ENCODE measurements at regions of chr6 and their contacts with region 1.

Region 1: GRCh38 chr6:158475344-158476302 is 84.3 kb upstream of the TMEM181 start:
- DNase-seq: peak; percentile 88
- ATAC-seq: peak; percentile 90
- H3K4me3 ChIP-seq: peak overlapping the region; percentile 55
- H3K27ac ChIP-seq: peak overlapping the region; percentile 81
- H3K4me1 ChIP-seq: peaks cover 31% of the 10 kb centered on the region
- H3K27me3 ChIP-seq: no peaks in the 10 kb centered on the region
- CTCF ChIP-seq: no peak
- EP300 ChIP-seq: peak; percentile 79 to 94
- POLR2A ChIP-seq: peak; percentile 79
- RAD21 ChIP-seq: no peak

Region 2: DNA sequence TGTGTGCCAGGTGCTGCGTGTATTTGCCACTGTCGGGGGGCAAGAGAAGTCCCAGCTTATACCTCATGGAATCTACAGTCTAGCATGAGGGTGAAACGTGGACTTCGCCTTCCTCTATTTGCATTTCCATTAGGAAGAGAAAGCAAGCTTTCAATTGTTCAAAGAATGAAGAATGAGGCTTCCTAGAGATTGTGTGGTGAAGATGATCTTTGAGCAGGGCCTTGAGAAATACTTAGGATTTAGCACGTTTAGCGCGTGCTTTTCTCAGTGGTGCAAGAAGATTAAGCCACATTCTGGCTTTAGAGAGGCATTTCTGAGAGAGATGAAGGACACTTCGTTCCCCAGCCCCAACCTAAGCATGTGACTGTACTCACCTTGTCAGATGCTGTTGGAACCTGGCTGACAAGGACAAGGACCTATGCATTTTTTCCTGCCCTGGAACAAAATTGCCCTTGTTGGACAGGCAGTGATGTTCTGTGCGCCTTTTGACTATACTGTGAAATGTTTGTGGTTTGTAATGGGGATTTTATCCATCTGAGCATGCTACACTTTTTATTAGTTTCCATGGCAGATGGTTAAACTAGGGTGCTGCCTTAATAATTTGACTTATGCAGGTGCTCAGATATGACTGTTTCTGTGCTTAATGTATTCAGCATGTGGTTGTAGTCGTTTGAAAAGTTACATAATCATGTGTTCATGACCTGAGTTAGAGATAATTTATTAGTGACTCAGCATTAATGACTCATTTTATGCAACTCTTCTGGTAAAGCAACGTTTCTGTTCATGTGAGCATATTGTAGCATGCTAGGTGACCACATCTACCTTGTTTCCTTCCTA is 152.7 kb before region 1 on chr6:
- CTCF ChIA-PET with region 1: no interaction called
- POLR2A ChIA-PET with region 1: no interaction called
- RAD21 ChIA-PET with region 1: no interaction called
- SMC1A ChIA-PET with region 1: interaction called, 3 read pairs
- in situ Hi-C with region 1: no loop called
- intact Hi-C with region 1: loop called (anchors 2 kb)
- DNase-seq: peak; percentile 45
- ATAC-seq: peak; percentile 87
- H3K4me3 ChIP-seq: no peak overlapping the region; the same call in 1 of the 2 replicates
- H3K27ac ChIP-seq: peak overlapping the region; percentile 2
- H3K4me1 ChIP-seq: peaks cover 31% of the 10 kb centered on the region
- H3K27me3 ChIP-seq: no peaks in the 10 kb centered on the region
- CTCF ChIP-seq: no peak
- EP300 ChIP-seq: peak in 1 of 2 experiments; percentile 43; a peak in 2 of 4 replicates
- POLR2A ChIP-seq: no peak
- RAD21 ChIP-seq: no peak

Region 3: GRCh38 chr6:158518191-158519127 is 42.8 kb after region 1 on chr6:
- CTCF ChIA-PET with region 1: interaction called, 27 read pairs
- POLR2A ChIA-PET with region 1: interaction called, 9 read pairs
- RAD21 ChIA-PET with region 1: interaction called, 14 read pairs
- SMC1A ChIA-PET with region 1: interaction called, 17 read pairs
- in situ Hi-C with region 1: no loop called
- intact Hi-C with region 1: loop called (anchors 1 kb)
- DNase-seq: peak; percentile 71
- ATAC-seq: peak; percentile 89
- H3K4me3 ChIP-seq: peak overlapping the region; percentile 54; the same call in 1 of the 2 replicates
- H3K27ac ChIP-seq: peak overlapping the region; percentile 10
- H3K4me1 ChIP-seq: peaks cover 13% of the 10 kb centered on the region
- H3K27me3 ChIP-seq: no peaks in the 10 kb centered on the region
- CTCF ChIP-seq: peak; percentile 64 to 69 (median 69)
- EP300 ChIP-seq: 0 out of 4 replicates have a peak, but pooled peaks of 1 of the 2 experiments have one; percentile 13
- POLR2A ChIP-seq: no peak
- RAD21 ChIP-seq: peak; percentile 83

Region 4: GRCh38 chr6:158644231-158645063 is 168.8 kb after region 1 on chr6 and contains the start of gene DYNLT1:
- CTCF ChIA-PET with region 1: interaction called, 3 read pairs
- POLR2A ChIA-PET with region 1: interaction called, 3 read pairs
- RAD21 ChIA-PET with region 1: interaction called, 5 read pairs
- SMC1A ChIA-PET with region 1: interaction called, 7 read pairs
- in situ Hi-C with region 1: no loop called
- intact Hi-C with region 1: loop called (anchors 5 kb)
- DNase-seq: peak; percentile 71
- ATAC-seq: peak; percentile 71
- H3K4me3 ChIP-seq: peak within 1 kb of the TSS; percentile 81
- H3K27ac ChIP-seq: peak within 1 kb of the TSS; percentile 82
- H3K4me1 ChIP-seq: peaks cover 26% of the 10 kb centered on the region
- H3K27me3 ChIP-seq: no peaks in the 10 kb centered on the region
- CTCF ChIP-seq: no peak
- EP300 ChIP-seq: no peak
- POLR2A ChIP-seq: peak; percentile 97
- RAD21 ChIP-seq: no peak
- polyA plus RNA-seq, gene DYNLT1: 246 to 298 TPM

Measured in GM12878 (cell line).